Panc1 (cell line): ENCODE measurements at regions of chr7 and their contacts with region 1.

Region 1: DNA sequence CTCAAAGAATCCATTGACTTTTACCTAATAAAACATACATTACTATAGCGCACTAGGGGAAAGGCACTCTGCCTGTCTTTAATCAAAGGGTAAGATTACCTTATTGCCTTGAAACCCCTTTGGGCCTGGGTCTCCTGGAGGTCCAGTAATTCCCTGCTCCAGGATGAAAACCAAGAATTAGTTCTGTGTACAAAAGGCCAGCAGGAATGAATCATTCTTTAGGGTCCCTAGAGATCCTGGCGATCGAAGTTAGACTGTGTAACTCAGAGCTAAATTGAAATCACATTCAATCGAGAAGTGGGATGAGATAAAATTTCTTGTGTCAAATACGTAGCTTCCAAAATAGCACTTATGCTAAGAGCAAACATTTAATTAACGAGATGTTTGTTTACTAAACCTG is 29.8 kb downstream of the COL28A1 start:
- DNase-seq: no peak
- ATAC-seq: no peak
- H3K4me3 ChIP-seq: no peak overlapping the region
- H3K27ac ChIP-seq: no peak overlapping the region
- H3K4me1 ChIP-seq: no peaks in the 10 kb centered on the region
- H3K27me3 ChIP-seq: no peaks in the 10 kb centered on the region
- CTCF ChIP-seq: no peak

Region 2: GRCh38 chr7:7489546-7489945 is 16.4 kb before region 1 on chr7:
- CTCF ChIA-PET with region 1: no interaction called
- POLR2A ChIA-PET with region 1: interaction called, 11 read pairs
- in situ Hi-C with region 1: no loop called
- intact Hi-C with region 1: no loop called
- DNase-seq: no peak
- ATAC-seq: no peak
- H3K4me3 ChIP-seq: no peak overlapping the region
- H3K27ac ChIP-seq: no peak overlapping the region
- H3K4me1 ChIP-seq: no peaks in the 10 kb centered on the region
- H3K27me3 ChIP-seq: no peaks in the 10 kb centered on the region
- CTCF ChIP-seq: no peak

Region 3: GRCh38 chr7:7554021-7554432 is 48.1 kb after region 1 on chr7:
- CTCF ChIA-PET with region 1: no interaction called
- POLR2A ChIA-PET with region 1: no interaction called
- in situ Hi-C with region 1: no loop called
- intact Hi-C with region 1: no loop called
- DNase-seq: no peak
- ATAC-seq: no peak
- H3K4me3 ChIP-seq: no peak overlapping the region
- H3K27ac ChIP-seq: no peak overlapping the region
- H3K4me1 ChIP-seq: no peaks in the 10 kb centered on the region
- H3K27me3 ChIP-seq: no peaks in the 10 kb centered on the region; the same call in 1 of the 2 replicates
- CTCF ChIP-seq: no peak

Region 4: DNA sequence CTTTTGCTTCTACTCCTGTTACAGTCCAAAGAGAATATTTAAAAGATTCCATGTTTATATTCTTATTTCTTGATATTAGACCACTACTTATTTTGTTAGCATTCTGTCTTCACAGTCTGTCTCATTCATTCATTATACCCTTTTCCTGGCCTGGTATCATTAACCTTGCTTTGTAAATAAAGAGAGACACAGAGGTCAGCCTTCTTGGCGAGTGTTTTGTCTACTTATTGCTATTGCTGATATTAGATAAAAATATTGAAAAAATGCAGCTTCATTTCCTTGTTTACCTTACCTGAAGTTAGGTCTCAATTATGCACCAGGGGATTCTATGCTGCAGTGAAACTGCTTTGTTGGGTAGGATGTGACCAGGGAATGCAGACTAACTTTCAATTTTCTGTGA is 1106.7 kb after region 1 on chr7:
- CTCF ChIA-PET with region 1: interaction called, 10 read pairs
- POLR2A ChIA-PET with region 1: no interaction called
- in situ Hi-C with region 1: no loop called
- intact Hi-C with region 1: no loop called
- DNase-seq: no peak
- ATAC-seq: no peak
- H3K4me3 ChIP-seq: no peak overlapping the region
- H3K27ac ChIP-seq: no peak overlapping the region
- H3K4me1 ChIP-seq: no peaks in the 10 kb centered on the region
- H3K27me3 ChIP-seq: no peaks in the 10 kb centered on the region
- CTCF ChIP-seq: no peak